Naive thymus-derived CD8-positive, alpha-beta T cell (primary cell): ENCODE measurements at regions of chr13 and their contacts with region 1.

Region 1: DNA sequence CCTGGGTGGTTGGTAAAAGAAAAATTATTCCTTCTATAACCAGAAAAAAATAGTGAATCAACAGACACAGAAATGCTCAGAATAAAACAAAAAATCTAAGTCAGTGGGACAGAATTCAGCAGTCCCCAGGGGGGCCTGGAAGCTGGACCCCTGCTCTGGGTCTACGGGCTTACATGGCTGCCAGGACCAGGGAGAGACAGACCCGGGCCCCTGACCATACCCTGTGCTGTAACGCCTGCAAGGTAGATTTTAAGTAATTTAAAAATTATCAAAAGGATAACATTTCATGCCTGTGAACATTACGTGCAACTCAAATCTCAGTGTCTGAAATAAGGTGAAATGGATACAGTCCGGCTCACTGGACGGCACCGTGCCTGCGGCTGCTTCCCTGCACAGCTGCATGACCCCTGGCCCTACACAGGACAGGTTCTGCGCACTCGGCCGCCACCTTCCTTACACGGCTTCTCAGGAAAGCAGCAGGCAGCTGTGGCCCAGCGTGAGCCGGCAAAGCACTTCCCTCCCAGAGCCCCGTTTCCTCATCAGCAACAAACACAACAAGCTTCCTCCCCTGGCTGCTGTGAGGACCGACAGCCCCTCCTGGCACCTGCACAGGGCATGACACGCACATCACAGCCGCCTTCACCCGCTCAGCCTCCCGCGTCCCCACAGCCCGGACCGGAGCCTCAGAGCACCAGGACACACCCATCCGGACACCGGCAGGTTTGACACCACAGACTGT is 22.2 kb downstream of the RASA3 start:
- DNase-seq: peak; percentile 64 to 92 (median 83)
- ATAC-seq: peak; percentile 82 to 87
- H3K4me3 Mint-ChIP-seq: peak overlapping the region; percentile 78 to 92 (median 86)
- H3K27ac Mint-ChIP-seq: peak overlapping the region; percentile 95 to 99 (median 98)
- H3K4me1 Mint-ChIP-seq: peaks cover 43 to 86% (median 82%) of the 10 kb centered on the region in 4 donors
- H3K27me3 Mint-ChIP-seq: peaks cover 0 to 1% (median 0%) of the 10 kb centered on the region in 5 donors

Region 2: GRCh38 chr13:114065141-114065925 is 44.9 kb before region 1 on chr13:
- POLR2A ChIA-PET with region 1: interaction called, 25 read pairs
- DNase-seq: peak; percentile 39 to 77 (median 62)
- ATAC-seq: peak; percentile 70 to 74
- H3K4me3 Mint-ChIP-seq: peak overlapping the region; percentile 84 to 93 (median 86)
- H3K27ac Mint-ChIP-seq: peak overlapping the region; percentile 91 to 99 (median 96)
- H3K4me1 Mint-ChIP-seq: peaks cover 36 to 70% (median 67%) of the 10 kb centered on the region in 4 donors
- H3K27me3 Mint-ChIP-seq: no peaks in the 10 kb centered on the region

Region 3: GRCh38 chr13:114097212-114097892 is 12.9 kb before region 1 on chr13:
- POLR2A ChIA-PET with region 1: interaction called, 12 read pairs
- DNase-seq: peak in 1 of 10 donors; percentile 7
- ATAC-seq: no peak
- H3K4me3 Mint-ChIP-seq: peak overlapping the region; percentile 31 to 85 (median 66)
- H3K27ac Mint-ChIP-seq: peak overlapping the region; percentile 71 to 98 (median 89)
- H3K4me1 Mint-ChIP-seq: peaks cover 57 to 84% (median 79%) of the 10 kb centered on the region in 4 donors
- H3K27me3 Mint-ChIP-seq: no peaks in the 10 kb centered on the region

Region 4: GRCh38 chr13:114226699-114227323 is 116.6 kb after region 1 on chr13:
- POLR2A ChIA-PET with region 1: interaction called, 25 read pairs
- DNase-seq: peak; percentile 69 to 89 (median 80)
- ATAC-seq: peak; percentile 81 to 87
- H3K4me3 Mint-ChIP-seq: peak overlapping the region; percentile 7 to 76 (median 58)
- H3K27ac Mint-ChIP-seq: peak overlapping the region; percentile 78 to 95 (median 88)
- H3K4me1 Mint-ChIP-seq: peaks cover 20 to 49% (median 49%) of the 10 kb centered on the region in 4 donors
- H3K27me3 Mint-ChIP-seq: peaks cover 0 to 7% (median 4%) of the 10 kb centered on the region in 5 donors